GM12878 (cell line): ENCODE measurements at regions of chr4 and their contacts with region 1.

Region 1: GRCh38 chr4:93897559-93897958 is 69.0 kb downstream of the ATOH1 start:
- DNase-seq: no peak
- ATAC-seq: peak; percentile 73
- H3K4me3 ChIP-seq: no peak overlapping the region
- H3K27ac ChIP-seq: no peak overlapping the region
- H3K4me1 ChIP-seq: no peaks in the 10 kb centered on the region
- H3K27me3 ChIP-seq: no peaks in the 10 kb centered on the region
- CTCF ChIP-seq: peak; percentile 26 to 39 (median 36); a peak in 5 of 6 replicates
- EP300 ChIP-seq: no peak
- POLR2A ChIP-seq: no peak
- RAD21 ChIP-seq: peak; percentile 22; the same call in 1 of the 2 replicates

Region 2: DNA sequence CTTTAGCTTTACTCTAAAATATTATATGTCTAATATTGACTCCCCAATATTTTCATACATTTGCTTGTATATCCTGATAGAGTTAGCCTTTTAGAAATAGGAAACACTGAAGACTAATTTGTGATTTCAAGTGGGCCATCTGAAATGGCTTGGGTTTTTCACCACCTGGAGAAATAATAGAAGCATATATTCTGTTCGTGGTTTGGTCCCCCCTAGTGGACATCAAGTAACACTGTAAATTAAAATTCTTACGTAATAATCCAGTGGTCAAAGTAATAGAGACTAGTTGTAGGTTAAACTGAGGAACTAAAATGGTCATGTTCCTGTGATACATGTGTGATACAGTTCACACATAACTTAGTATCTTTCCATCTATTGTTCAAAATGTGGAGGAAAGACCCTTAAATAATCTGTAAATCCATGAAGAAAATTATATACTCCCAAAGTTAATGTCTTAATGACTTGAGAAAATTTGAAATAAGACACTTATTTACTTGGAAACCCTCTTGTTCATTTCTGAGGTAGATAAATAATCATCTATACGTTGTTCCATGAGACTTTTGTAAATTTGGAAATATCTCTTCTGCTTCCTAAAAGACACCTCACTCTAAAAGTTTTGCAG is 230.3 kb after region 1 on chr4:
- CTCF ChIA-PET with region 1: no interaction called
- POLR2A ChIA-PET with region 1: no interaction called
- RAD21 ChIA-PET with region 1: no interaction called
- SMC1A ChIA-PET with region 1: interaction called, 3 read pairs
- in situ Hi-C with region 1: loop called (anchors 10 kb)
- intact Hi-C with region 1: loop called (anchors 2 kb)
- DNase-seq: no peak
- ATAC-seq: peak; percentile 76
- H3K4me3 ChIP-seq: no peak overlapping the region
- H3K27ac ChIP-seq: no peak overlapping the region
- H3K4me1 ChIP-seq: no peaks in the 10 kb centered on the region
- H3K27me3 ChIP-seq: no peaks in the 10 kb centered on the region
- CTCF ChIP-seq: peak; percentile 41 to 49 (median 48); a peak in 5 of 6 replicates
- EP300 ChIP-seq: no peak
- POLR2A ChIP-seq: no peak
- RAD21 ChIP-seq: peak; percentile 58

Region 3: GRCh38 chr4:94171616-94172015 is 274.1 kb after region 1 on chr4:
- CTCF ChIA-PET with region 1: no interaction called
- POLR2A ChIA-PET with region 1: no interaction called
- RAD21 ChIA-PET with region 1: no interaction called
- SMC1A ChIA-PET with region 1: no interaction called
- in situ Hi-C with region 1: no loop called
- intact Hi-C with region 1: no loop called
- DNase-seq: no peak
- ATAC-seq: no peak
- H3K4me3 ChIP-seq: no peak overlapping the region
- H3K27ac ChIP-seq: no peak overlapping the region
- H3K4me1 ChIP-seq: no peaks in the 10 kb centered on the region
- H3K27me3 ChIP-seq: no peaks in the 10 kb centered on the region
- CTCF ChIP-seq: peak; percentile 4 to 37 (median 34); a peak in 3 of 6 replicates
- EP300 ChIP-seq: no peak
- POLR2A ChIP-seq: no peak
- RAD21 ChIP-seq: no peak